K562 (cell line): ENCODE measurements at regions of chr2 and their contacts with region 1.

Region 1: GRCh38 chr2:163132850-163133249 is 294.3 kb upstream of the KCNH7 start:
- DNase-seq: no peak
- ATAC-seq: no peak
- H3K4me3 ChIP-seq: no peak overlapping the region
- H3K27ac ChIP-seq: no peak overlapping the region
- H3K4me1 ChIP-seq: no peaks in the 10 kb centered on the region
- H3K27me3 ChIP-seq: no peaks in the 10 kb centered on the region
- CTCF ChIP-seq: peak in 1 of 3 experiments; percentile 33; a peak in 1 of 6 replicates
- EP300 ChIP-seq: no peak
- POLR2A ChIP-seq: no peak
- RAD21 ChIP-seq: peak in 1 of 2 experiments; percentile 22; a peak in 1 of 4 replicates

Region 2: DNA sequence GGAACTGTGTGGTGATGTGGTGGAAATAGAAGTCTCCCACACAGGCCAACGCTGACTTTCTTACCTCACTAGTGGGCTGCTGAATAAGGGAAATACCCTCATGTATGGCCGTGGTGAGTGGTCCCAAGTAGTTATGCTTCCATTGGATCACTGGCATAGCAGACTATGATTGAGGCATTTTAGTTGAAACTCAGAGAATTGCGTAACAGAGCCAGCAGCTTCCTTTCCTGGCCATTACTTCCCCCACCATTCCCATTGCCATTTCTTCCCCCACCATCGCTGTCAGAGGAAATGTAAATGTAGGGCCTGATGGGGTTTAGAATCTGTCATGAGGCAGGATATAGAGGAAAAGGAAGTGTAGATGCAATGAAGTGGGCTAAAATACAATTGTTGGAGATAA is 503.8 kb before region 1 on chr2:
- CTCF ChIA-PET with region 1: no interaction called
- POLR2A ChIA-PET with region 1: no interaction called
- in situ Hi-C with region 1: no loop called
- intact Hi-C with region 1: no loop called
- DNase-seq: no peak
- ATAC-seq: no peak
- H3K4me3 ChIP-seq: no peak overlapping the region
- H3K27ac ChIP-seq: no peak overlapping the region
- H3K4me1 ChIP-seq: no peaks in the 10 kb centered on the region
- H3K27me3 ChIP-seq: no peaks in the 10 kb centered on the region
- CTCF ChIP-seq: no peak
- EP300 ChIP-seq: no peak
- POLR2A ChIP-seq: no peak
- RAD21 ChIP-seq: no peak

Region 3: GRCh38 chr2:162890690-162891311 is 242.0 kb before region 1 on chr2:
- CTCF ChIA-PET with region 1: no interaction called
- POLR2A ChIA-PET with region 1: no interaction called
- in situ Hi-C with region 1: no loop called
- intact Hi-C with region 1: loop called (anchors 2 kb)
- DNase-seq: peak; percentile 18 to 44 (median 37)
- ATAC-seq: peak; percentile 58; the same call in 2 of the 3 replicates
- H3K4me3 ChIP-seq: no peak overlapping the region
- H3K27ac ChIP-seq: no peak overlapping the region
- H3K4me1 ChIP-seq: no peaks in the 10 kb centered on the region
- H3K27me3 ChIP-seq: no peaks in the 10 kb centered on the region
- CTCF ChIP-seq: peak; percentile 27 to 55 (median 51); a peak in 4 of 6 replicates
- EP300 ChIP-seq: no peak
- POLR2A ChIP-seq: no peak
- RAD21 ChIP-seq: peak; percentile 45 to 69; a peak in 3 of 4 replicates

Region 4: DNA sequence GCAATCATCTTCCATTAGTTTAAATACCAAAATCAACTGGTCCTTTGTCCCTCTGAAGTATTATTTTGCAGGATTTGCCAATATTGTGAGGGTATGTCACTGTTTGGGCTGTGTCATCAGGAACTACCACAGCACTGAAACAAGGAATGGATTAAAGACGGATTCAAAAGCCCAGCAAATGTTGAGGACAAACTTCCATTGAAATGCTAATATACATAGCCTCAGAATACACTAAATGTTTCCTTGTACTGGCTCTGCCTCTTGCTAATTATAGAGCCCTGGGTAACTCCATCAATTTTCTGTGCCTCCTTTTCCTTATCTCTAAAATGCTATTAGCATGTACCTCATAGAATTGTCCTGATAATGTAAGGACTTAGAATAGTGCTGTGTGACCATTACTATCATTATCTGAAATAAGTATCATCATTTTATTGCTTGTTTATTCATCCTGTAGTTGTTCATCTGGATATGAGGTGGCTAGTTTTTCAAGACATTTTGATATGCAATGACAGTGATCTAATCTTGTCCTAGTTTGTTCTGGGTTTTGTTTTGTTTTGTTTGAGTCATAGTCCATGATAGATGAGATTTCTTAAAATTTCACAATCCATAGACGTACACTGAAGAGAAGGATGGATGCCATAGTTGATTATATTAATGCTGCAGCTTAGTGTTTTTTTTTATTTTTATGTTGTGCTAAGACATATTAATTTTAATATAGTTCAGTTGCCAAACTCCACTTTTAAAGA is 39.1 kb after region 1 on chr2:
- CTCF ChIA-PET with region 1: no interaction called
- POLR2A ChIA-PET with region 1: no interaction called
- in situ Hi-C with region 1: no loop called
- intact Hi-C with region 1: no loop called
- DNase-seq: no peak
- ATAC-seq: no peak
- H3K4me3 ChIP-seq: no peak overlapping the region
- H3K27ac ChIP-seq: no peak overlapping the region
- H3K4me1 ChIP-seq: no peaks in the 10 kb centered on the region
- H3K27me3 ChIP-seq: no peaks in the 10 kb centered on the region
- CTCF ChIP-seq: no peak
- EP300 ChIP-seq: no peak
- POLR2A ChIP-seq: no peak
- RAD21 ChIP-seq: no peak